CD8-positive, alpha-beta memory T cell (primary cell): ENCODE measurements at regions of chr5 and their contacts with region 1.

Region 1: GRCh38 chr5:39187831-39188731 is 31.3 kb downstream of the FYB1 start:
- DNase-seq: peak in 2 of 5 donors; percentile 55 to 57
- H3K4me3 ChIP-seq: peak overlapping the region; percentile 23
- H3K4me3 Mint-ChIP-seq: peak overlapping the region; percentile 70 to 89 (median 80)
- H3K27ac ChIP-seq: no peak overlapping the region
- H3K27ac Mint-ChIP-seq: peak overlapping the region; percentile 90 to 99 (median 94)
- H3K4me1 ChIP-seq: peaks cover 92% of the 10 kb centered on the region
- H3K4me1 Mint-ChIP-seq: peaks cover 87 to 98% (median 96%) of the 10 kb centered on the region in 3 donors
- H3K27me3 ChIP-seq: no peaks in the 10 kb centered on the region
- H3K27me3 Mint-ChIP-seq: no peaks in the 10 kb centered on the region

Region 2: GRCh38 chr5:39164529-39165402 is 23.3 kb before region 1 on chr5:
- CTCF ChIA-PET with region 1: interaction called, 263 read pairs
- POLR2A ChIA-PET with region 1: interaction called, 6 read pairs
- DNase-seq: peak in 1 of 5 donors; percentile 16
- H3K4me3 ChIP-seq: peak overlapping the region; percentile 11
- H3K4me3 Mint-ChIP-seq: peak overlapping the region; percentile 36 to 77 (median 67)
- H3K27ac ChIP-seq: peak overlapping the region; percentile 33
- H3K27ac Mint-ChIP-seq: peak overlapping the region; percentile 40 to 94 (median 90)
- H3K4me1 ChIP-seq: peaks cover 97% of the 10 kb centered on the region
- H3K4me1 Mint-ChIP-seq: peaks cover 89 to 98% (median 97%) of the 10 kb centered on the region in 3 donors
- H3K27me3 ChIP-seq: no peaks in the 10 kb centered on the region
- H3K27me3 Mint-ChIP-seq: no peaks in the 10 kb centered on the region

Region 3: DNA sequence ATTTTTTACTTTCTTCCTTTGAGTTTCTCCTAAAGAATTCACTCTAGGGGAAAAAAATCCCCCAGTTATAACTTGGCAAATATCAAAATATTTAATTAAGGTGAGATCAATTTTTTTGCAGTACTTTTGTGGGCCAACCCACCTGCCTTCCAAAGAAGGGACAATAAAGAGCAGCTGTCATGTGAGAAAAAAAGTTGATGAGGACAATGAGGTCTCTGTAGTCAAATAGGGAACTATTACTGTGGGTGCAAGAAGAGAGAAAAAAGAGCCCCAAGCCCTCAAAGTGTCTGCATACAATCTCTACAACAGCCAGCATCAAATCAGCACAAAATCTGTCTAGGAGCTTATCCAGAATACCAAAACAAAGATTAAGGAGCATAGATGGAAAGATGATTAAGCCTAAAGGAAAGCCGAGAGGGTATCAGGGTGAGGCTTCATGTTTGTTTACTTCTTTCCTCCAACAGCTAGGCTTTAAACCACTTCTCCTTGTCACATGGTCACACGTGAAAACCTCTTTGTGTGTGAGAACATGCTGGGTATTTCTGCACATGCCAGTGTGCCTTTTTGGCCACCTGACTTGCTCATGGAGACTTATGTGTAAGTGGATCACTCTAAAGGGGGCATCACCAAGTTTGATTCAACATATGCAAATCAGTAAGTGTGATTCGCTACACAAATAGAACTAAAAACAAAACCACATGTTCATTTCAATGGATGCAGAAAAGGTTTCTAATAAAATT is 50.5 kb after region 1 on chr5:
- CTCF ChIA-PET with region 1: no interaction called
- POLR2A ChIA-PET with region 1: no interaction called
- DNase-seq: no peak
- H3K4me3 ChIP-seq: no peak overlapping the region
- H3K4me3 Mint-ChIP-seq: peak overlapping the region in 5 of 7 donors; percentile 12 to 51 (median 39)
- H3K27ac ChIP-seq: no peak overlapping the region
- H3K27ac Mint-ChIP-seq: peak overlapping the region; percentile 41 to 91 (median 61)
- H3K4me1 ChIP-seq: peaks cover 8% of the 10 kb centered on the region
- H3K4me1 Mint-ChIP-seq: peaks cover 20 to 43% (median 31%) of the 10 kb centered on the region in 3 donors
- H3K27me3 ChIP-seq: no peaks in the 10 kb centered on the region
- H3K27me3 Mint-ChIP-seq: no peaks in the 10 kb centered on the region